ENCODE measurements at regions of chr2 and their contacts with region 1.

Region 1: DNA sequence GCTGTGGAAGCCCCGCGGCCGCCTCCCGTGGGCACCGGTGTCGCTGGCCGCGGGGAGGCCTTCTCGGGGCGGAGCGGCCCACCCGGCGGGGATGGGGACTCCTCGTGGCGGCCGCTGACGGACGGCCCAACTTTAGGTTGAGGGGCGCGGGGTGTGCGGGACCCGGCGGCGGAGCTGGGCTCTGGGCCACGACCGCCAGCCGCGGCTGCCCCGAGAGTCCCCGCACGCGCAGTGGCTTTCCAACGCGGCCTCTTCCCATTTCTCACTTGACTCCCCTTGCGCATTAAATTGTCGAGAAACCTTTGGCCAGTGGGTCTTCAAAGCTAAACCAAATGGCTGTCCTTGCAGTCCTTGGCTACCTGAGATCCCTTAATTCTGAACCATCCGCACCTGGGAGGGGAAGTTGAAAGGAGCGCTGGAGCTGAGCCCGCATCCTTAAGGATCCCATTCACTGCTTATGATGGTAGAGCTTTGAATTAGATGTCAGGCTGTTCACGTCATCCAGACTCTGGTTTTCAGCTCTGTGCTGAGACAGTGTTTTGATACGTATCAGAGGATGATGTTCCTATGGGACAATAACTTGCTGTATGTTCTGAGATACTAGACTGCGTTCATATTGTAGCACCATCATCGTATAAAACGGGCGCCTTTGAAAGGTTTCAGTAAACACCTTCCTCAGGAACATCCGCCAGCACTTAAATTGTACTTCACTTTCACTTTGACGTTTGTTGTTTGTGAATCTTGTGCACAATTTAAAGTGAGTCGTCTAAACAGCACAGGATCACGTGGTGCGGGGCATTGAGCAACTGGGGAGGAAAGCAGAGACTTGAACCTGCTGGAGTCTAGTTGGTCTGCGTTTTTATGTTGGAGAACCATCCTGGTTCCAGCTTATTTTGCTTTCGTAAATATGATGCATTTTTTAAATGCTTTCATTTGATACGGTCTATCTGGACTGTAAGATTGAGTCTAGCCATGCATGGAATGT is 874 bp downstream of the CLIP4 start:
- DNase-seq: peak; percentile 89
- H3K4me3 ChIP-seq: peak overlapping the region; percentile 62 to 84 (median 78)
- H3K27ac ChIP-seq: peak overlapping the region; percentile 84 to 94 (median 91)
- H3K4me1 ChIP-seq: peaks cover 0 to 36% (median 27%) of the 10 kb centered on the region in 4 donors
- H3K27me3 ChIP-seq: no peaks in the 10 kb centered on the region
- CTCF ChIP-seq: no peak
- EP300 ChIP-seq: no peak
- POLR2A ChIP-seq: no peak

Region 2: GRCh38 chr2:28981016-28981441 is 135.1 kb before region 1 on chr2 and contains the start of gene TOGARAM2:
- intact Hi-C with region 1: loop called (anchors 2 kb)
- DNase-seq: peak; percentile 82
- H3K4me3 ChIP-seq: no peak within 1 kb of the TSS
- H3K27ac ChIP-seq: peak within 1 kb of the TSS; percentile 71 to 83 (median 76)
- H3K4me1 ChIP-seq: peaks cover 0 to 55% (median 41%) of the 10 kb centered on the region in 4 donors
- H3K27me3 ChIP-seq: no peaks in the 10 kb centered on the region
- CTCF ChIP-seq: no peak
- EP300 ChIP-seq: no peak
- POLR2A ChIP-seq: no peak
- total RNA-seq, gene TOGARAM2: 0.28 to 3.2 (median 1.8) TPM

Region 3: DNA sequence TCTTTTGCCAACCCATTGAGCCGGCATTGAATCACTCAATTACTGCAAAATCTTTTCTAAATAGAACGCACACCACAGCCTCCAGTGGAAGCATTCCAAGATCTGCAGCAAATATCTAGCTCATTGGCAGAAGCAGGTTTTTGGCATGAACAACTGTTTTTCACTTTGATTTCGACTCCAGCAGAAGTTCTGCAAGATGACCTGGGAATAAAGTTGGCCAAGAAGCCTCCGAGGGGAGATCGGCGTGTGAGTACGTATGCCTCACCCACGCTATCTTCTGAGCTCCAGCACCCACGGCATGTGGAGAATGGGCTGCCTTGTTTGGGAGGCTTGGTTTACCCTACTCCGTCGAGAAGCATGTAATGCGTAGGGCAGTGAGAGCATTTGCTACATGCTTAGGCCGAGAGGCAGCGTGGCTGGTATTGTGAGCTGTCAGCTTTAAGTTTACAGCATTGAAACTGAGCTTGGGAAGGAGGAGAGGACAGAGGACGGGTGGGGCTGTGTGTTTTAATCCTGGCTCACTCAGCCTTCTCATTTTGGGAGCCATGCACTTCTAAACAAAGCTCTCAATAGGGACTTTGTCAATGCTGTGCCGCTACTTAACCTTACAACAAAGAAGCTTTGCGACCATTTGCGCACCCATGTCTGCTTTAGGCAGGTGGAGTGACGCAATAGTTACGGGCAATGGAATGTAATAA is 52.3 kb before region 1 on chr2:
- intact Hi-C with region 1: loop called (anchors 2 kb)
- DNase-seq: no peak
- H3K4me3 ChIP-seq: peak overlapping the region; percentile 9 to 31 (median 12)
- H3K27ac ChIP-seq: peak overlapping the region; percentile 30 to 79 (median 75)
- H3K4me1 ChIP-seq: peaks cover 0 to 38% (median 35%) of the 10 kb centered on the region in 4 donors
- H3K27me3 ChIP-seq: no peaks in the 10 kb centered on the region
- CTCF ChIP-seq: no peak
- EP300 ChIP-seq: no peak
- POLR2A ChIP-seq: no peak

Region 4: GRCh38 chr2:29245742-29246382 is 129.8 kb after region 1 on chr2:
- intact Hi-C with region 1: no loop called
- DNase-seq: no peak
- H3K4me3 ChIP-seq: no peak overlapping the region
- H3K27ac ChIP-seq: no peak overlapping the region
- H3K4me1 ChIP-seq: no peaks in the 10 kb centered on the region
- H3K27me3 ChIP-seq: no peaks in the 10 kb centered on the region
- CTCF ChIP-seq: no peak
- EP300 ChIP-seq: no peak
- POLR2A ChIP-seq: no peak

Measured in sigmoid colon (tissue), 7 donors.